Breast epithelium (tissue), 4 donors: ENCODE measurements at regions of chr21 and their contacts with region 1.

Region 1: DNA sequence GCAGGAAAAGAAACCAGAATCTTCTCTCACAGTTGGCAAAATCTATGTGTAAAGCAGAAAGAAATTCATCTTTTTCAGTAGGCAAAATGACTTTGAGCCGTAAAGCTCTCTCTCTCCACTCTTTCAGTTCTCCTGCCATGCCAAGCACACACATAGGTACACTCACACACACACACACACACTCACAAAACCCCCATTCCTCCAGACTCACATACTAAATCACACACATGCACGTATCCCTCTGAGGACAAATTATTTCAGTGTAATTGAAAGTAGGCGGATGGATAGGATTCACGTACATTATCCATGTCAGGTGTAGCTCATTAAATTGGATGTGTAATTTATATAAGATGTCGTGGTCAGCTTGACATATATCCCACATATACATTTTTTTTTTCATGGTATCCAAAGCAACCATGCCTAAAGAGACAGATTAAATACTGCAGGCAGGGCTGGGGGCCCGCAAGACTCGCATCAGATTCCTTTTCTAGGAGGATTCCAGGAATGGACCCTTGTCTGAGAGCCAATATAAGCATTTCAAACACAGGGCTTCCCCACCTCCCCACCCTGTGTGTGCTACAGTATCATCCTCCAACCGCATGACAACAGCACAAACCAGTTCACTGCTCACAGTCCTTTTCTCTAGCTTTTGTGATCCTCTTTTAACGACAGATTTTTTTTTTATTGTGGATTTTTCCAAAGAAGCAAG is 320.9 kb downstream of the PCP4 start:
- DNase-seq: no peak
- H3K4me3 ChIP-seq: no peak overlapping the region
- H3K27ac ChIP-seq: no peak overlapping the region
- H3K4me1 ChIP-seq: no peaks in the 10 kb centered on the region
- H3K27me3 ChIP-seq: no peaks in the 10 kb centered on the region
- CTCF ChIP-seq: no peak
- POLR2A ChIP-seq: no peak

Region 2: DNA sequence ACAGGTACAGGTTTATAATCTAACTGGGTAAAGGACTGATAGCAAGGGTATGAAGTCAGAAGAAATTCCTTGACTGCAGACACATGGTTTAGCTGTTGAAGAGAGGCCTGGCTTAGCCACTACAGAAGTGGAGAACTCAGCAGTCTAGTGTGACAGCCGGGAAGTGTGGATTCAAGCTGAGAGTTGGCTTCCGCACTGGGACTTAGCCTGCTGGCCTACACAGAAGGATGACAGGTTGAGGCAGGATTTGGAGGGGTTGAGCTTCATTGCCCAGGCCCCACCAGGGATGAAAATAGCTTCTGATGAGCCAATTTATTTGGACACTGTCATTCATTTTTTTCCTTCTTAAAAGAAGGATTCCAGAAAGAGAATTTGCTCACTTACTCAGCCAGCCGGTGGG is 36.5 kb before region 1 on chr21:
- intact Hi-C with region 1: no loop called
- DNase-seq: no peak
- H3K4me3 ChIP-seq: no peak overlapping the region
- H3K27ac ChIP-seq: no peak overlapping the region
- H3K4me1 ChIP-seq: no peaks in the 10 kb centered on the region
- H3K27me3 ChIP-seq: no peaks in the 10 kb centered on the region
- CTCF ChIP-seq: no peak
- POLR2A ChIP-seq: no peak

Region 3: DNA sequence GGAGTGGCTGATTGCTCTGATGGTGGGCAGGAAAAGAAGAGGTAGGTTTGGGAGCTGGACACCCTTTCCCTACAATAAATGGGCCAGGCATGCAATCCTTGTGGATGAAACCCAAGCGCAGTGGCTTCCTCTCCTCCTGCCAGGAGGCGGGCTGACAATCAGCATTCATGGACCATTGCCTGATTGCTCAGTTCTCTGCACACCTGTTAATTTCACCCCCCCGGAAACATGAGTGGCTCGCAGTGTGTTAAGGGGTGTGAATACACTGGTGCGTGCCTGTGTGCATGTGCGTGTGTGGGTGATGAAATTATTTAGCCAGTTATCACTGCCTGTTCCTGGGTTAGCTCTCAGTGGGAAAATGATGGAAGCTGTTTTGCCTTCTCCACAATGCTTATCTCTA is 10.1 kb before region 1 on chr21:
- intact Hi-C with region 1: loop called (anchors 1 kb)
- DNase-seq: no peak
- H3K4me3 ChIP-seq: no peak overlapping the region
- H3K27ac ChIP-seq: no peak overlapping the region
- H3K4me1 ChIP-seq: no peaks in the 10 kb centered on the region
- H3K27me3 ChIP-seq: peaks cover 0 to 5% of the 10 kb centered on the region in 2 donors
- CTCF ChIP-seq: no peak
- POLR2A ChIP-seq: no peak

Region 4: DNA sequence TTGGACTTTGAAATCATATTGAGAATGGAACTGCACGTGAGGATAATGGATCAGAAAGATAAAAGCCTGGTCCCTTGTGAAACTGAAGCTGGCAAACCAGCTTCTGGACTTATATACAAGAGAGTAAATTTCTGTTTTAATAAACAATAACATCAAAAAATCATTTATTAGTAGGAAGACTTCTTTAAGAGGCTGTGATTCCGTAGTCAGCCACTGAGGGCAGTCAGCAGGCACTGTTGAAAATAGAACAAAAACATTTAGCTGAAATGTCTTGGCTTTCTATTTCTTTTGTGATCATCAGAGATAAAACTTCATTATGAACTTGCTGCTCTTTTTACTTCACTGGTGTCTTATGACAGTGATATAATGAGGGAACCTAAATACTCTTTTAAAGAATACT is 168.5 kb after region 1 on chr21:
- intact Hi-C with region 1: no loop called
- DNase-seq: no peak
- H3K4me3 ChIP-seq: no peak overlapping the region
- H3K27ac ChIP-seq: no peak overlapping the region
- H3K4me1 ChIP-seq: no peaks in the 10 kb centered on the region
- H3K27me3 ChIP-seq: no peaks in the 10 kb centered on the region
- CTCF ChIP-seq: no peak
- POLR2A ChIP-seq: no peak

Region 5: GRCh38 chr21:40976198-40977109 is 788.4 kb after region 1 on chr21:
- intact Hi-C with region 1: no loop called
- DNase-seq: no peak
- H3K4me3 ChIP-seq: no peak overlapping the region
- H3K27ac ChIP-seq: no peak overlapping the region
- H3K4me1 ChIP-seq: no peaks in the 10 kb centered on the region
- H3K27me3 ChIP-seq: no peaks in the 10 kb centered on the region
- CTCF ChIP-seq: no peak
- POLR2A ChIP-seq: no peak

Region 6: GRCh38 chr21:41175154-41176045 is 987.3 kb after region 1 on chr21:
- intact Hi-C with region 1: no loop called
- DNase-seq: no peak
- H3K4me3 ChIP-seq: no peak overlapping the region
- H3K27ac ChIP-seq: no peak overlapping the region
- H3K4me1 ChIP-seq: peaks cover 0 to 2% of the 10 kb centered on the region in 2 donors
- H3K27me3 ChIP-seq: no peaks in the 10 kb centered on the region
- CTCF ChIP-seq: no peak
- POLR2A ChIP-seq: no peak